ENCODE measurements at regions of chr14 and their contacts with region 1.

Region 1: DNA sequence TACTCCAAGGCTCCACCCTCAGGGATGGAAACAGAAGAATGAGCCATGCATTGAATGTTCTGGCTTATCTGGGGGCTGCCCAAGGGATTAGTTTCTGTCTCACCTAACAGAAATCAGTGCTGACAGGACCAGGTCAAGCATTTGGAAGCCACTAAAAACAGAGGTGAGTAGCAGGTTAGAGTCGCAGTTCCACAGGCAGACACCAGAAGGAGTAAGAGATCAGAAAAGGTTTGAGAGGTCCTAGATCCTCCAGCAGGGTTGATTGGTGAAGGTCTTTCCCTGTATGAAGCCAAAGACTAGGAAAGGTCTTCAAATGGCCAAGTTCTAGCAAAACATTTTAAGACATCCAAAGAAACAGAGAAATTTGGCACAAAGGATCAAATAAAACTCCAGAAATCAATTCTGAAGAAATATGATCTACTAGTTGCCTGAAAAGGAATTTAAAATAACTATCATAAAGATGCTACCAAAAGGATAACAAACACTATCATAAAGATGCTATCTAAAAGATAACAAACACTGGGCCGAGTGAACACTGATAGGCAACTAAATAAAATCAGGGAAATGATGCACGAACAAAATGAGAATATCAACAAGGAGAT is 19.5 kb upstream of the TTC9 start:
- DNase-seq: no peak
- H3K4me3 ChIP-seq: no peak overlapping the region
- H3K27ac ChIP-seq: no peak overlapping the region
- H3K4me1 ChIP-seq: no peaks in the 10 kb centered on the region
- H3K27me3 ChIP-seq: no peaks in the 10 kb centered on the region
- CTCF ChIP-seq: peak in 5 of 6 experiments; percentile 64 to 88 (median 82)
- POLR2A ChIP-seq: no peak

Region 2: GRCh38 chr14:70716958-70717357 is 94.7 kb after region 1 on chr14:
- intact Hi-C with region 1: loop called (anchors 5 kb)
- DNase-seq: no peak
- H3K4me3 ChIP-seq: no peak overlapping the region
- H3K27ac ChIP-seq: peak overlapping the region in 3 of 4 donors; percentile 45 to 79 (median 63)
- H3K4me1 ChIP-seq: peaks cover 0 to 58% (median 6%) of the 10 kb centered on the region in 3 donors
- H3K27me3 ChIP-seq: no peaks in the 10 kb centered on the region
- CTCF ChIP-seq: no peak
- POLR2A ChIP-seq: no peak

Region 3: DNA sequence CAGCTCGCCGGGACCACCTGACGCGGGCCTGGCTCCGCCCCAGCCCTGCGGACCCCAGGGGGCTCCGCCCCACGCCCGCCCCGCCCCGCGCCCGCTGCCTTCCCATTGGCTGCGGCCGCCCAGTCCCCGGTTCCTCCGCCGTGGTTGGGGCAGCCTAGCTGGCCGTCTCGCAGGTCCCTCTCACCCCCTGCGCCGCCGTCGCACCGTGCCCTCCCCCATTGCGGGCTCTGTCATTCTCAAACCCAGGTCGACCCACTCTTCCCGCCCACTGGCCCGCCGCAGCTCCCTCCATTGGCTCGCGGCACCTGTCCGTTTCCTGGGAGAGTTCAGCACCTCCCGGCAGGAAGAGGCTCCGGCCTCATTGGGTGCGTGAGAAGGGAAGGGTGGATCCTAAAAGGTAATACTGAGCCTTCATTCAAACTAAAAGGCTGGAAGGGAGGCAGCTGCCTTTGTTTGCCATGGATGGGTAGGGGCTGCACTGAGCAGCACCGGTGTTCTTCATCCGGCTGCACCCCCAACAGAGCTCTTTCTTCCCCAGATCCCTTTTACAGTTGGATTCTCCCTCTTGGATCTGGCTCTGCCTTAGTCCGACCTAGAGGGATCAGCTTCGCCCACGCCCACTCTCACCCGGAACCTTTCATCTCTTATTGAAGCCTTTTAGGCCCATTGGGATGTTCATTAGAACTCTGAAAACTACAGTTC is 187.5 kb after region 1 on chr14:
- intact Hi-C with region 1: loop called (anchors 10 kb)
- DNase-seq: peak; percentile 59
- H3K4me3 ChIP-seq: peak overlapping the region; percentile 65 to 89 (median 72)
- H3K27ac ChIP-seq: peak overlapping the region; percentile 87 to 89 (median 88)
- H3K4me1 ChIP-seq: peaks cover 0 to 45% (median 3%) of the 10 kb centered on the region in 3 donors
- H3K27me3 ChIP-seq: peaks cover 0 to 27% (median 0%) of the 10 kb centered on the region in 4 donors
- CTCF ChIP-seq: no peak
- POLR2A ChIP-seq: peak in 2 of 4 donors; percentile 29 to 31